Testis (tissue), 5 donors: ENCODE measurements at regions of chr6 and their contacts with region 1.

Region 1: DNA sequence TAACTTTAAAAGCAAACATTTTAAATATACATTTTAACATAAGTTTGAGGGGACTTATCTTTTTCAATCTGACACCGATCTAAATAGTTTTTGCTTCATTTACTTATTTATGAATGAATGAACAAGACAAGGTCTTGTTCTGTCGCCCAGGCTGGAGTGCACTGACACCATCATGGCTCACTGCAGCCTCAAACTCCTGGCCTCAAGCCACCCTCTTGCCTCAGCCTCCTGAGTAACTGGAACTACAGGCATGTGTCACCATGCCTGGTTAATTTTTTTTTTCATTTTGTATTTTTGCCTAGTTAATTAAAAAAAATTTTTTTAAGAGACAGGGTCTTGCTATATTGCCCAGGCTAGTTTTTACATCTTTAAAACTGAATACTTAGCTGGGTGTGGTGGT is 25.4 kb downstream of the FBXO9 start:
- DNase-seq: no peak
- H3K4me3 ChIP-seq: no peak overlapping the region
- H3K27ac ChIP-seq: no peak overlapping the region
- H3K4me1 ChIP-seq: no peaks in the 10 kb centered on the region
- H3K27me3 ChIP-seq: no peaks in the 10 kb centered on the region
- CTCF ChIP-seq: no peak
- POLR2A ChIP-seq: no peak

Region 2: DNA sequence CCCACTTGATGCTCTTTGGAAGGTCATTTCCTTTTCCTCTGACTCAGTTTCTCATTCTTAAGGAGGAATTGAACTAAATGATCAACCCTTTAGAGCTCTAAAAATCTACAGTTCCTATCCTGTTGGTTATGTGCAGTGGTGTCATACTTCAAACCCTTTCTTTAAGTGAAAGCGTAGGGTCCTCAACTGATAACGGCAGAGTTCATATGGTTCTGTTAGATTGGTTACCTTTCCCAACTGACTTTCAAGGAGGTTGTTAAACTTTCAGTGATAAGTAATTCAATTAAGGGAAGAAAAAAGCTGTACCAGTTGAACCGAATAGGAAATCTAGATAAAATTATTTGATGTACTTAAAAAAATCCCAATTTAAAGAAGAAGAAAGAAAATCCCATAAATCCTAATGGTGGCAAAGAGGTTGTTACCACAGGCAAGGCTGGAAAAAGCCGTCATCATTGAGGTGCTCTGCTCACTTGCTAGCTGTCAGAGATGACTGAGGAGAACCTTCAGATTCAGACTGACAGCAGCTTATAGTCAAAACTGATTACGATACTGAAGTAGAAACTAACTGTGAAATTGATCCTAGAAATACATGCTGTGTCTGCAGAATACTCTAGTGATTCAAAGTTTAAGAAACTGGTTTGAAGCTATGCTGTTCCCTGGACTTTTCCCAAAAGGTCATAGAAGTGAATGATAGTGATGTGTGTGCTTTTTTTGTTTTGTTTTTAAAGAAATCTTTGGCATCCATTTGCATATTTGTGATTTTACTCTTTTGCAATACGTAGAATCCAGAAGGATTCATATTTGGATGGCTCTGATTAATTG is 403.5 kb before region 1 on chr6:
- intact Hi-C with region 1: loop called (anchors 10 kb)
- DNase-seq: no peak
- H3K4me3 ChIP-seq: no peak overlapping the region
- H3K27ac ChIP-seq: no peak overlapping the region
- H3K4me1 ChIP-seq: no peaks in the 10 kb centered on the region
- H3K27me3 ChIP-seq: no peaks in the 10 kb centered on the region
- CTCF ChIP-seq: no peak
- POLR2A ChIP-seq: no peak

Region 3: GRCh38 chr6:52937908-52938307 is 152.7 kb before region 1 on chr6:
- intact Hi-C with region 1: no loop called
- DNase-seq: no peak
- H3K4me3 ChIP-seq: no peak overlapping the region
- H3K27ac ChIP-seq: no peak overlapping the region
- H3K4me1 ChIP-seq: no peaks in the 10 kb centered on the region
- H3K27me3 ChIP-seq: no peaks in the 10 kb centered on the region
- CTCF ChIP-seq: no peak
- POLR2A ChIP-seq: no peak

Region 4: GRCh38 chr6:52995913-52996645 is 94.5 kb before region 1 on chr6:
- intact Hi-C with region 1: no loop called
- DNase-seq: peak; percentile 62
- H3K4me3 ChIP-seq: peak overlapping the region; percentile 82 to 95
- H3K27ac ChIP-seq: peak overlapping the region; percentile 97 to 98
- H3K4me1 ChIP-seq: peaks cover 13% of the 10 kb centered on the region
- H3K27me3 ChIP-seq: no peaks in the 10 kb centered on the region
- CTCF ChIP-seq: no peak
- POLR2A ChIP-seq: no peak